Heart right ventricle (tissue), 16 donors: ENCODE measurements at regions of chr13 and their contacts with region 1.

Region 1: DNA sequence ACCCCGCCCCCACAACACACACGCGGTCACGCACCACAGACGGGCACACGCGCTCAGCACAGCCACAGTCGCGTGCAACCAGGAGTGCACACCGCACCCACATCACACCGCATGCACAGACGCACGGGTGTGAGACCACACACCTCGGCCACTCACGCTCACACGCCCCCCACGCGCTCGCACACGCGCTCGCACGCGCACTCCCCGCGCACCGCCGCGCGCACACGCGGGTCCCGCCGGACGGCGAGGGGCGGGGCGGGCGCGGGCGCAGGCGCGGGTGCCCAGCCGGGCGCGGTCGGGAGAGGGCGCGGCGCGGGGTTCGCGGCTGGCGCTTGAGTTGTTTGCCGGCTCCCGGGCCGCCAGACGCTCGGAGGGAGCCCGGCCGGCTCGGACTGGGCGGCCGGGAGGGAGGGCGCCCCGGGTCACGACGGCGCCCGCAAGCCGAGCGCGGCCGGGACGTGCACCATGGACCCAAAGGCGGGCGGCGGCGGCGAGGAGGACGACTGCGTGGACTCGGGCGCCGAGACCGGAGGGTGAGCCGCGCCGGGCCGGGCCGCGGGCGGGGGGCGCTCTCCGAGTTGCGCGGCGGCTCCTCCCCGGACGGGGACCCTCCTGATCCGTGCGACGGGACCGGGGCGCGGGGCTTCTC is at the start of gene FAM124A:
- DNase-seq: peak; percentile 36 to 66
- ATAC-seq: peak; percentile 53 to 94 (median 80)
- H3K4me3 ChIP-seq: peak within 1 kb of the TSS; percentile 68 to 98 (median 83)
- H3K27ac ChIP-seq: peak within 1 kb of the TSS; percentile 58 to 89 (median 78)
- H3K4me1 ChIP-seq: peaks cover 0 to 34% (median 18%) of the 10 kb centered on the region in 9 donors
- H3K27me3 ChIP-seq: peaks cover 0 to 33% (median 0%) of the 10 kb centered on the region in 7 donors
- CTCF ChIP-seq: peak in 6 of 9 donors; percentile 3 to 55 (median 32)
- total RNA-seq, gene FAM124A: 5.1 to 14.0 (median 8.4) TPM

Region 2: DNA sequence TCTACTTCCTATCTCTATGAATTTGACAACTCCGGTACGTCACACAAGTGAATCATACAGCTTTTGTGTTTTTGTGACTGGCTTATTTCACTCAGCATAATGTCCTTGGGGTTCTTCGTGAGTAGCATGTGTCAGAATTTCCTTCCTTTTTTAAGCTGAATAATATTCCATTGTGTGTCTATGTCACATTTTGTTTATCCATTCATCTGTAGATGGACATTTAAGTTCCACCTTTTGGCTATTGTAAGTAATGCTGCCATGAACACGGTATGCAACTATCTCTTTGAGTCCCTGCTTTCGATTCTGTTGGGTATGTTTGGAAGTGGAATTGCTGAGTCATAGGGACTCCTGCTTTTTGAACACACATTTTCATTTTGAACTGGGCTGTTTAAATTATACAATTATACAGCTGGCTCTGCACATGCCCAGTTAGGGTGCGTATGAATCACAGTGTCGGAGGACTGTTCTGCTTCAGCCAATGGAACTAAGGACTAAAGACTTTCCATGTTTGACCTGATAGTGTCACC is 68.1 kb before region 1 on chr13:
- intact Hi-C with region 1: loop called in 1 of 10 experiments (anchors 5 kb)
- DNase-seq: no peak
- ATAC-seq: peak in 2 of 8 donors; percentile 30 to 65
- H3K4me3 ChIP-seq: no peak overlapping the region
- H3K27ac ChIP-seq: no peak overlapping the region
- H3K4me1 ChIP-seq: peaks cover 0 to 14% (median 0%) of the 10 kb centered on the region in 9 donors
- H3K27me3 ChIP-seq: peaks cover 0 to 4% (median 0%) of the 10 kb centered on the region in 7 donors
- CTCF ChIP-seq: no peak

Region 3: GRCh38 chr13:51246418-51247277 is 24.5 kb after region 1 on chr13:
- intact Hi-C with region 1: no loop called
- DNase-seq: peak; percentile 65 to 66
- ATAC-seq: peak; percentile 85 to 97 (median 94)
- H3K4me3 ChIP-seq: peak overlapping the region in 2 of 10 donors; percentile 13 to 24
- H3K27ac ChIP-seq: peak overlapping the region; percentile 23 to 84 (median 70)
- H3K4me1 ChIP-seq: peaks cover 0 to 36% (median 9%) of the 10 kb centered on the region in 9 donors
- H3K27me3 ChIP-seq: no peaks in the 10 kb centered on the region
- CTCF ChIP-seq: no peak

Region 4: GRCh38 chr13:51269039-51269438 is 46.9 kb after region 1 on chr13:
- intact Hi-C with region 1: no loop called
- DNase-seq: no peak
- ATAC-seq: no peak
- H3K4me3 ChIP-seq: no peak overlapping the region
- H3K27ac ChIP-seq: no peak overlapping the region
- H3K4me1 ChIP-seq: peaks cover 0 to 49% (median 23%) of the 10 kb centered on the region in 9 donors
- H3K27me3 ChIP-seq: no peaks in the 10 kb centered on the region
- CTCF ChIP-seq: no peak